H1 (cell line): ENCODE measurements at regions of chr1 and their contacts with region 1.

Region 1: DNA sequence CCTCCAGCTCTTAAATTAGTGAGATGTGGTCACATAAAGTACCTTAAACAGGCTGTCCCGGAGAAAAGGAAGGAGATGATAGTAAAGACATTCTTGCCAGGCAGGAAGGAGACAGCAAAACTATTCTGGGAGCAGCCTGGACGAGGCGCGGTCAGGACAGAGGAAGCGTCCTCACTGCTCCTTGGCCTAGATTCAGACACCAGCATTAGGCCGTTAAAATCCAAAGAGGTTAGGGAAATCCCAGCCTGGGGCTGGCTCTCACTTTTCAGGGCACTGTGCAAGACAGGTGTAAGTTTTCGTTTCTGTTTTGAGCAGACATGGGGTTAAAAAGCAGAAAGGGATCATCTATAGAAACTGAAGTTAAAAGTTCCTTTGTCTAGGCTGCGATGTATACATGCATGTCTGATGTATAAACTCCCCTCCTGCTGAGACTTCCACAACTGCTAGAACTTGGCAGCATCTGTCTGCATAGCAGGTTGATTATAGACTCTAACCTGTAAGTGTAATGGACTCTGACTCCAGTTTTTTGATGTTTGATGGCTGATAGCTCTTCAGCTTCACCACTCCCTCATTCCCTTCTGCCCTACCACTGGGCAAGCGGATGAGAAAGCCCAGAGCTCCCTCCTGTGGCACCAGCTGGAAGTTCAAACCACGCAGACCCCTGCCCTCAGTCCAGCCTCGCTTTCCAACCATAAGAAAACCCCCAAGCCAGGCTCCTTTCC is 21.5 kb downstream of the STPG1 start:
- DNase-seq: peak; percentile 70 to 88
- H3K4me3 ChIP-seq: no peak overlapping the region
- H3K27ac ChIP-seq: no peak overlapping the region
- H3K4me1 ChIP-seq: peaks cover 0 to 2% (median 0%) of the 10 kb centered on the region in 4 experiments; a peak in 4 of 7 replicates
- H3K27me3 ChIP-seq: no peaks in the 10 kb centered on the region
- CTCF ChIP-seq: peak; percentile 90 to 92 (median 92)
- EP300 ChIP-seq: no peak
- POLR2A ChIP-seq: no peak
- RAD21 ChIP-seq: peak; percentile 92 to 97

Region 2: GRCh38 chr1:24047101-24047459 is 345.0 kb before region 1 on chr1:
- CTCF ChIA-PET with region 1: no interaction called
- POLR2A ChIA-PET with region 1: no interaction called
- DNase-seq: no peak
- H3K4me3 ChIP-seq: no peak overlapping the region
- H3K27ac ChIP-seq: no peak overlapping the region
- H3K4me1 ChIP-seq: no peaks in the 10 kb centered on the region; a peak in 1 of 7 replicates
- H3K27me3 ChIP-seq: no peaks in the 10 kb centered on the region
- CTCF ChIP-seq: no peak
- EP300 ChIP-seq: no peak
- POLR2A ChIP-seq: no peak
- RAD21 ChIP-seq: no peak

Region 3: DNA sequence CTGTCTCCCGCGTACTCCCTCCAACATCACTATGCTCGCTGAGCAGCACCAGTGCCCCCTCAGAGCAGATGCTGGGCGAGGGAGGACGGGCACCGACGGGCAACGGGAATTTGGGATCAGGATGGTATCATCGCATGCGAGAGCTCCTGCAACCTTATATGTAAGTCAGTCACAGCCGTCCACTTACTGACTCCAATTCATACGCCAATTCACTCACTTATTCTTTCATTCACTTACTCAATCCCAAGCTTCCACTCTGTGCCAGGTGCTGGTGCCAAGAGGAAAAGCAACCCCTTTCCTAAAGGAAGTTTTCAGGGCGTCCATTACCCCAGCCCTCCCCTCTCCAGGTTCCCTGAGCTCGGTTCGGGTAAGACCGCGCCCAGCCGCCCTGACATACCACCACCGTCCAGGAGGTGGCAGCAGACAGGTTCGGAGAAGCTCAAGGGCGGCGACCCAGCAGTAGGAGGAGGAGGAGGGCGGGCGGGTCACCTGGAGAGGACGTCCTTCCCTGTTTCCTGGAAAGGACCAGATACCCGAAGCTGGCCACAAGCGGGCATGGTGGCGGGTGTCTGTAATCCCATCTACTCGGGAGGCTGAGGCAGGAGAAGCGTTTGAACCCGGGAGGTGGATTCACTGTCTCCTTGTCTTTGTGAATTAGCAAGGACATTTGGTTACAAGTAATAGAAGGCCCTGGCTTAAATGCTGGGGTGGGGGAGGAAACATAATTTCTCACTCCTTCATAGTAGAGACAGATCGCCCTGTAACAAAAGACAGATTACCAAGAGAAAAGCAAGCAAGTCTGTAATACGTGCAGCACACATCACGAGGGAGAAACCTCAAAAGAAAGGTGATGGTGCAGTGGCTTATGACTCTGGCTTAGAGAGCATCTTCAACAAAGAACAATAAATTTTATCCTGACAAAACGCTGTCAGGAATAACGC is 241.5 kb before region 1 on chr1:
- CTCF ChIA-PET with region 1: interaction called, 13 read pairs
- POLR2A ChIA-PET with region 1: interaction called, 6 read pairs
- DNase-seq: peak; percentile 91 to 100
- H3K4me3 ChIP-seq: peak overlapping the region; percentile 19 to 58 (median 34); a peak in 6 of 8 replicates
- H3K27ac ChIP-seq: peak overlapping the region; percentile 97
- H3K4me1 ChIP-seq: peaks cover 3 to 23% (median 15%) of the 10 kb centered on the region in 4 experiments
- H3K27me3 ChIP-seq: no peaks in the 10 kb centered on the region
- CTCF ChIP-seq: peak; percentile 83 to 89 (median 88)
- EP300 ChIP-seq: no peak
- POLR2A ChIP-seq: peak; percentile 76 to 91
- RAD21 ChIP-seq: peak; percentile 55 to 70; a peak in 3 of 4 replicates

Region 4: DNA sequence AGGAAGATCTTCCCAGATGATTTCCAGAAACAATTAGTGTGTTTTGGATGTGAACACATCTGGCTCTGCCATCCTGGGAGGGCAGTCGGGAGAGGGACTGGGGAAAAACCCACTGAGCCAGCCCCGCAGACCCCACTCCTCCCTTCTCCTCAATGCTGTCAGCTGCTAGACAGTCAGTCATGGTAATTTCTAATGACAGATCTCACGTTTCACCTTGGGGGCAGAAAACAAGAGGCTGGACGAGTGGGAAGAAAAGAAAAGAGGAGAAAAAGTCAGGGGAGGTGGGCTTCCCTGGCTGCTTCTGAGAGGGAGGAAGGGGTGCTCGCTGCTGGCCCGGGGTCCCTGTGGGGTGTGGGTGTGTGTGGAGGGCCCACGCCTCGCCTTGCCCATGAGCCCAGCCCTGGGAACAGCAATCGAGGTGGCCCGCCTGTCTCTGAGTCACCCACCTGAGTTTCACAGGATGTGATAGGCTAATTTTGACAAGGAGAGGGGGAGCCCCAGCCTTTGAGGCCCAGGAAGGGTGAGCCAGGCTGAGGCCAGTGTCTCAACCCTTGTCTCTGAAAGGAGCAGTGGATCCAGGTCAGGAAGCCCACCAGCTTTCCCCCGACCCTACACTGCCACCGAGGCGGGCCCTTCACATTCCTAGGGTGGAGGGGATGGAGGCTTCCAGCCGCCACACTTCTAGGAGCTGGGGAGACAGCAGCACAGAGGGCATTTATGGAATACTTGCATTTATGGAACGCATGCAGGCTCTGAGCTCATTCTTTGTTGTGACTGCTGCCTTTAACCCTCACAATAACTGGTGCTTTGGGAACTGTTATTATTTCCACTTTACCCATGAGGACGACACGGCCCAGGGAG is 155.9 kb before region 1 on chr1:
- CTCF ChIA-PET with region 1: interaction called, 22 read pairs
- POLR2A ChIA-PET with region 1: no interaction called
- DNase-seq: peak in 1 of 2 experiments; percentile 51
- H3K4me3 ChIP-seq: no peak overlapping the region
- H3K27ac ChIP-seq: no peak overlapping the region
- H3K4me1 ChIP-seq: peaks cover 0 to 6% (median 4%) of the 10 kb centered on the region in 4 experiments; a peak in 4 of 7 replicates
- H3K27me3 ChIP-seq: no peaks in the 10 kb centered on the region
- CTCF ChIP-seq: no peak
- EP300 ChIP-seq: no peak
- POLR2A ChIP-seq: no peak
- RAD21 ChIP-seq: no peak

Region 5: DNA sequence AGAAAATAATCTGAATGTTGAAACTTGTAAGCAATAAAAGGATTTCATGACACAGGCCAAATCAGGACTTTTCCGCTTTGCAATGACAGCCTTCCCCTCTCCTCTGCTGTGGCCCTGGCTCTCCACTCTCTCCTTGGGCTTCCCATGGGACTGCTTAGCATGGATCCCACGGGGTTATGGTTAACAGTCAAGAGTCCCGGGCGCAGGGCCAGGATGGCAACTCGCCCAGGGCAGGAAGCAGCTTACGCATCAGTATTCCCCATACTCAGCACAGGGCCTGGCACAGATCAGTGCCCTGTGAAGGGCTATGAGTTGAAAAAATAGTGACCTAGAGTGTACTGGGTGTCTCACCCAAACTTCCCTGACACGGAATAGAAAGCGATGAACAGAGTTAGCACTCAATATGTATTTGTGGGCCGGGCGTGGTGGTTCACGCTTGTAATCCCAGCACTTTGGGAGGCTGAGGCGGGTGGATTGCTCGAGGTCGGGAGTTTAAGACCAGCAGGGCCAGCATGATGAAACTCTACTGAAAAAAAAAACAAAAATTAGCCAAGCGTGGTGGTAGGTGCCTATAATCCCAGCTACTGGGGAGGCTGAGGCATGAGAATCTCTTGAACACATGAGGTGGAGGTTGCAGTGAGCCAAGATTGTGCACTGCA is 102.0 kb before region 1 on chr1:
- CTCF ChIA-PET with region 1: interaction called, 39 read pairs
- POLR2A ChIA-PET with region 1: no interaction called
- DNase-seq: no peak
- H3K4me3 ChIP-seq: no peak overlapping the region
- H3K27ac ChIP-seq: no peak overlapping the region
- H3K4me1 ChIP-seq: peaks cover 6 to 23% (median 11%) of the 10 kb centered on the region in 4 experiments
- H3K27me3 ChIP-seq: 0 out of 7 replicates have a peak, but pooled peaks cover 0 to 1% (median 0%) of the 10 kb centered on the region in 4 experiments
- CTCF ChIP-seq: no peak
- EP300 ChIP-seq: no peak
- POLR2A ChIP-seq: no peak
- RAD21 ChIP-seq: no peak

Region 6: DNA sequence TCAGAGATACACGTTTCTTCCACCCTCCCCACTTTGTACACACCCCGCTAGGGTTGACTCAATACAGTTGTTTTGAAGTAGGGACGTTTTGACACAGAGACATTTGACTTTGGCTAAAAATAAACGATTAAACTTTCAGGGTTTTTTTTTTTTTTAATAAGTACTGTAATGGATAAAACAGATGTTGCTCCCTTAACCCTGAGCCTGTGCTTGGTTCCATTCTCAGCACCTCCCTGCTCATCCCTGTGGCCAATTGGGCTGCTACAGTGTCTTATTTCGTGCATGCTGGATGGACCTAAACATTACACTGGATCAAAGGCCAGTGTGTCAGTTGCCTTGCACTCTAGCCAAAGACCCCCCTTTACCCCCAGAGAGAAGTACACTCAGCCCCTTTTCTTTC is 56.0 kb before region 1 on chr1:
- CTCF ChIA-PET with region 1: interaction called, 20 read pairs
- POLR2A ChIA-PET with region 1: no interaction called
- DNase-seq: no peak
- H3K4me3 ChIP-seq: no peak overlapping the region
- H3K27ac ChIP-seq: no peak overlapping the region
- H3K4me1 ChIP-seq: peaks cover 0 to 20% (median 14%) of the 10 kb centered on the region in 4 experiments; a peak in 6 of 7 replicates
- H3K27me3 ChIP-seq: no peaks in the 10 kb centered on the region
- CTCF ChIP-seq: no peak
- EP300 ChIP-seq: no peak
- POLR2A ChIP-seq: no peak
- RAD21 ChIP-seq: no peak

Region 7: GRCh38 chr1:24415334-24415909 is 23.4 kb after region 1 on chr1 and contains the start of gene NIPAL3:
- CTCF ChIA-PET with region 1: interaction called, 33 read pairs
- POLR2A ChIA-PET with region 1: no interaction called
- DNase-seq: peak; percentile 95 to 100
- H3K4me3 ChIP-seq: peak within 1 kb of the TSS; percentile 50 to 89 (median 76)
- H3K27ac ChIP-seq: no peak within 1 kb of the TSS
- H3K4me1 ChIP-seq: peaks cover 0 to 6% (median under 1%) of the 10 kb centered on the region in 4 experiments; a peak in 3 of 7 replicates
- H3K27me3 ChIP-seq: no peaks in the 10 kb centered on the region
- CTCF ChIP-seq: peak; percentile 83 to 93 (median 85)
- EP300 ChIP-seq: no peak
- POLR2A ChIP-seq: no peak
- RAD21 ChIP-seq: peak; percentile 67 to 71
- total RNA-seq, gene NIPAL3: 11.0 and 12.6 TPM in 2 replicates